Activated T-helper 2 cell treated with anti-CD3 and anti-CD28 coated beads, Interferon-gamma antibody, Interleukin-2, Interleukin-4, amounts not matched to agents 10 μg/mL and 5 μg/mL and 100 μg/mL, durations not matched to agents 14 hours and 24 hours and 36 hours (primary cell): ENCODE measurements at regions of chr3 and their contacts with region 1.

Region 1: DNA sequence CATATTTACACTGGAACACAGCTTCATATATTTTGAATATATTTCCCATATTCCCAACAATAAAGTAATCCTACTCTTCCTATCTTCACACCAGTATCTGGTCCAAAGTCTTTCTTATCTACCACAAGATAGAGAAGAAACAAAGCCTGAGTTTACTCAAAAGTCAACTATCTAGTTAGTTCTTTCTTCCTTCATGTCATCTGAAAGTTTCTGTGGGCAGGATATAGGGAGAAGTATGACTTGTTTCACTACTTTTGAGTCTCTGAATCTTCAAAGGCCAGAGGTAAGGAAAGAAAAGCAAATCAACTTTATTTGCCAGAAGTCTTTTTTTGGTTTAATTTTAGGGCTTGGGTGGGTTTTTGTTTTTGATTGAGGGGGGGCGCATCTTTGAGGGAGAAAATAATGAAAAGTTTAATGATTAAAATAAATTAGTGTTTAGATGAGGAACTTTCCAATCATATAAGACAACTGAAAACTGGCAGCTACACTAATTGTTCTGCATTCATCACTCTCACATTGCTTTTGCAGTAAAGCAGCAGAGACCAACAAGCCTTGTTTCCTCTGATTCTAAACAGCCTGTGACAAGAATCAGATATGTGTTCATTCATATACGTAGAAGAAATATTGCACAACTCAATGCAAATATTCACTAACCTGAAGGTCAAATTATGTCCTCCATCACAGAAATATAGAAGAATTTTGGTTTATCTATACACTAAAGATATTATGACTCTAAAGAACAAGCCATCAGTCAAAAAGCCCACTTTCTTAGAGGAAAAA is 421.4 kb downstream of the SHQ1 start:
- DNase-seq: no peak
- H3K4me3 Mint-ChIP-seq: peak overlapping the region; percentile 67
- H3K27ac Mint-ChIP-seq: peak overlapping the region; percentile 96
- H3K4me1 Mint-ChIP-seq: peaks cover 71% of the 10 kb centered on the region
- H3K27me3 Mint-ChIP-seq: no peaks in the 10 kb centered on the region

Region 2: DNA sequence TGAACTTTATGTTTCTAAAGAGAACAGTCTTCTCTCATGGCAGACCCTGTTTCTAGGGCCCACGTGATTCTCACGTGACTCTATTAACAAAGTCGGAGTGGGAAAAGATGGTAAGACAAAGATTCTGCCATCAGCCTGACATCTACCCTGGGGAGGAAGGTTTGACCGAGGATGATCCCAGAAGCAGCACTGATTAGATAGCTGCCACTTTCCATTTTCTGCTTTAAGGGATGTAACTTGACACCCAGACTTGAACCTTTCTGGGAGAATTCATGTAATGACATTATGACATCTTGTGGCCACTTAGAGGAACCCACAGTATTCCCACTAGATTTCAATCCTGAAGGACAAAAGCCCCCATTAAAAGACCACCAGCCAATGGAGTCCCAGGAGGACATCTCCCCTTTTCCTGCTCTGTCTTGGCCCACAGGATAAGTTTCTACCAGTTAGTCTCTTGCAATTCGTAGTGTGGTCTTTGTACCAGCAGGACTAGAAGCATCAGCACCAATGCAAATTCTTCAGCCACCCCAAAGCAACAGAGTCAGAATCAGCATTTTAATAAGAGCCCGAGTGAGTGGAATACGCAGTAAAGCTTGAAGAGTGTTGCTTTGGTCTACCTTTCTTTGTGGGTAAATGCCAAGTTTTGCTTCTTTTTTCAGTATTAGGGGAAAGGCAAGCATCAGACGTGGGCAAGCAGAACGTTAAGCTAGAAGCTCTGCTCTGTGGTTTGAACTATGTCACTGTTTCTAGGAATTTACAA is 161.4 kb before region 1 on chr3:
- intact Hi-C with region 1: loop called (anchors 10 kb)
- DNase-seq: no peak
- H3K4me3 Mint-ChIP-seq: no peak overlapping the region
- H3K27ac Mint-ChIP-seq: peak overlapping the region; percentile 56
- H3K4me1 Mint-ChIP-seq: peaks cover 42% of the 10 kb centered on the region
- H3K27me3 Mint-ChIP-seq: no peaks in the 10 kb centered on the region

Region 3: DNA sequence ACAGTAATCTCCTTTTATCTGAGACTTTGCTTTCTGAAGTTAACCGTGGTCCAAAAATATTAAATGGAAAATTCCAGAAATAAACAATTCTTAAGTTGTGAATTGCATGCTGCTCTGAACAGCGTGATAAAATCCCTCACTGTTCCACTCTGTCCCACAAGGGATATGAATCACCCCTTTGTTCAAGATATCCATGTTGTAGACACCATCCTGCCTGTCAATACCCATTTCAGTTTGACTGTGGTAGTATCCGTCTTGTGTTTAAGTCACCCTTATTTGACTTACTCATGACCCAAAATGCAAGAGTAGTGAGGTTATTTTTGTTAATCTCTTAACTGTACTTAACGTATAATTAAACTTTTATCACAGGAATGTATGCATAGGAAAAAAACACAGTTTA is 13.6 kb before region 1 on chr3:
- intact Hi-C with region 1: loop called (anchors 1 kb)
- DNase-seq: no peak
- H3K4me3 Mint-ChIP-seq: no peak overlapping the region
- H3K27ac Mint-ChIP-seq: peak overlapping the region; percentile 80
- H3K4me1 Mint-ChIP-seq: peaks cover 82% of the 10 kb centered on the region
- H3K27me3 Mint-ChIP-seq: no peaks in the 10 kb centered on the region

Region 4: DNA sequence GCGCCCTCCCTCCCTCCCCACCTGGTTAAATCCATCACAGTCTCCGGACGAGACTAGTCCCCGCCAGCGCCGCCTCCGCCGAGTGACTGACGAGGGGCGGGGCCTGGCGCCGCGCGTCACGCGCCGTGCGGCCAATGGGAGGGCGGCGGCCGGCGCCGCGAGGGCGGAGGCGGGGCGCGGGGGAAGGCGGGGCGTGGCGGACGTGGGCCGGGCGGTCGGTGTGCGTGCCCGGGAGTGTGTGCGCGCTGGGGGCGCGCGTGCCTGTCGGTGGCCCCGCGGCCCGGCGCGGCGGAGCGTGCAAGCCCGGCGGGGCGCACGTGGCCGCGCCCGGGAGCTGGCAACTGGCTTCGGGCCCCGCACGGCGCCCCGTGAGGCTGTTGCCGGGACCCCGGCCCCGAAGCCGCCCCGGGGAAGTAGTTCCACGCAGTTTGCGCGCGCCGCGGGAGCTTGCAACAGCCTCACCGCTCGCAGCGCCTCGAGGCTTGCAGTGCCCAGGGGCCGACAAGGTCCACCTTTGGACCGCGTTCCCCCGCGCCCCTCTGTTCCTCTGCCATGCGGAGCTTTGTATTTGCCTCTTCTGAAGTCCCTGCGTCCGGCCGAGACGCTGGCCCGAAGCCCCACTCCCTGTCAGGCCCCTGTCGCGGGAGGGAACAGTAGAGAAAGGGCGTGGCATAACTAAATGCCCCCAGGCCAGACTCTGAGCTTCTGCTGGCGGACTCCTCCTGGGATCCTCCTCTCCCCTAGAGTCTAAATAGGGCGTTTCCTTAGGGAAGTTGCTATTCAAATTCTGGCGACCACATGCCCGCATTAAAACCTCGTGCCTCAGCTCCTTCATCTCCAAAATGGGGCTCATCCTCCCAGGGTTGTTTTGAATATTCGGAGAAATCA is 20.5 kb after region 1 on chr3:
- intact Hi-C with region 1: loop called (anchors 1 kb)
- DNase-seq: peak; percentile 92
- H3K4me3 Mint-ChIP-seq: peak overlapping the region; percentile 66
- H3K27ac Mint-ChIP-seq: peak overlapping the region; percentile 60
- H3K4me1 Mint-ChIP-seq: peaks cover 52% of the 10 kb centered on the region
- H3K27me3 Mint-ChIP-seq: no peaks in the 10 kb centered on the region

Region 5: DNA sequence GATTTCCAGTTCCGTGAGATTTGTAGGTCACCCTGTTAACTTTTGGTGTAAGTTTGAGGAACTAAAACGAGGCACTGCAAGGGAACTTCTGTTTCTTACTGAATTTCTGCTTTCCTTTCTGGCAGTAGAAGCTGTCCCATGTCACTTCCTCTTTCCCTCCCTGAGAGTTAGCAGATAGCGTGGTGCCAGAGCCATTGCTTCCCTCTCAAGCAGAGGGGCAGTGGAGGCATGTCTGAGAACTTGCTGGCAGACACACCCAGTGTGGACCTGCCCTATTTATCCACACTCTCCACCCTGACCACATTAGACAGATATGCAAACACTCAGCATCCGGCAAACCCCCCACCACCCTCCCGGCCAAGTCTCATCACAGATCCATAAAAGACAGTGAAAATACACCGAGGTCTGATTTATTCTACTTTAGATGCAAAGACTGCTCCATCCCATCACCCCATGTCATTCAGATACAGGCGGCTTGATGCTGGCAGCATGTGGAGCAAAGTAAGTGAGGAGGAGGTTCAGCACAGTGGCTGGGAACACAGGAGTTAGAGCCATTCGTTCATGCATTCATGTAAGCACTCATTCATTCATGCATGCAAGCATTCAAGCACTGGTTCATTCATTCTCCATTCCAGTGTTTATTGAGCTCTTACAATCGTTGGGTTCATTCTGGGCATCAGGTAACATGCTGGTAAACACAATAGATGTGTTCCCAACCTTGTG is 96.8 kb after region 1 on chr3:
- intact Hi-C with region 1: loop called (anchors 1 kb)
- DNase-seq: no peak
- H3K4me3 Mint-ChIP-seq: no peak overlapping the region
- H3K27ac Mint-ChIP-seq: peak overlapping the region; percentile 51
- H3K4me1 Mint-ChIP-seq: peaks cover 44% of the 10 kb centered on the region
- H3K27me3 Mint-ChIP-seq: no peaks in the 10 kb centered on the region

Region 6: DNA sequence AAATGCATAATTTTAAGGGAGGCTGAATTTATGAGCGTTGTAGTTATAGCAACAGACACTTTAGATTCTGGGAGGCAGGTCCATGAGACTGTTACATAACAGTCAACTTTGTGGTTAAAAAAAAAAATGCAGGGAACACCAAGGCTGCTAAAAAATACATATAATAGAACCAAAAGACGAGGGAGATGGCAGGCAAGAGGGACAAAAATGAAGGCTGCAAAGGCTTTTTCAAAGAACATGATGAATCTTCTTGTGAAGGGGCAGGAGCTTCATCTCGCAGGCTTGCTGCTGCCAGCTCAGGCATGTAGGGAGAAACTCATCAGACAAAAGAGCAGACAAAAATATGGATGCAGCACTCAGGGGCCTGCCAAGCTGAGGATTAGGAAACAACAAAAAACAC is 177.5 kb after region 1 on chr3:
- intact Hi-C with region 1: no loop called
- DNase-seq: no peak
- H3K4me3 Mint-ChIP-seq: no peak overlapping the region
- H3K27ac Mint-ChIP-seq: no peak overlapping the region
- H3K4me1 Mint-ChIP-seq: no peaks in the 10 kb centered on the region
- H3K27me3 Mint-ChIP-seq: no peaks in the 10 kb centered on the region